Activated CD4-positive, alpha-beta T cell treated with anti-CD3 and anti-CD28 coated beads for 36 hours (primary cell): ENCODE measurements at regions of chr19 and their contacts with region 1.

Region 1: DNA sequence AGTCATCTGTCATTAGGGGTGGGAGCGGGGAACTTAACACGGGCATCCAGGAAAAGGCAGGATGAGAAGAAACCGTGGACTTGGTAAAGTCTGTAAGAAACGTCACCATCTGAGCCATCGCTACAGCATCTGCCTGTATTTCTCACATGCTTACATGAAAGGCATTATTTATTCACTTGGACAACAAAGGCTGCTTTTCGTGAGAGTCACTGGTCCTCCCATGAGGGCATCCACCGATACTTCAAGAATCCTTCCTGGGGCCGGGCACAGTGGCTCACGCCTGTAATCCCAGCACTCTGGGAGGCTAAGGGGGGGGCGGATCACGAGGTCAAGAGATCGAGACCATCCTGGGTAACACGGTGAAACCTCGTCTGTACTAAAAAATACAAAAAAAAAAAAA is 16.1 kb downstream of the ZNF446 start:
- DNase-seq: no peak
- ATAC-seq: no peak
- H3K4me3 Mint-ChIP-seq: no peak overlapping the region
- H3K27ac Mint-ChIP-seq: no peak overlapping the region
- H3K4me1 Mint-ChIP-seq: peaks cover 7% of the 10 kb centered on the region
- H3K27me3 Mint-ChIP-seq: no peaks in the 10 kb centered on the region

Region 2: GRCh38 chr19:58196901-58197616 is 295.2 kb before region 1 on chr19:
- CTCF ChIA-PET with region 1: no interaction called
- POLR2A ChIA-PET with region 1: no interaction called
- intact Hi-C with region 1: no loop called
- DNase-seq: no peak
- ATAC-seq: no peak
- H3K4me3 Mint-ChIP-seq: no peak overlapping the region
- H3K27ac Mint-ChIP-seq: no peak overlapping the region
- H3K4me1 Mint-ChIP-seq: no peaks in the 10 kb centered on the region
- H3K27me3 Mint-ChIP-seq: no peaks in the 10 kb centered on the region

Region 3: GRCh38 chr19:58284199-58284598 is 208.1 kb before region 1 on chr19:
- CTCF ChIA-PET with region 1: no interaction called
- POLR2A ChIA-PET with region 1: no interaction called
- intact Hi-C with region 1: no loop called
- DNase-seq: no peak
- ATAC-seq: no peak
- H3K4me3 Mint-ChIP-seq: no peak overlapping the region
- H3K27ac Mint-ChIP-seq: no peak overlapping the region
- H3K4me1 Mint-ChIP-seq: peaks cover 26% of the 10 kb centered on the region
- H3K27me3 Mint-ChIP-seq: no peaks in the 10 kb centered on the region

Region 4: DNA sequence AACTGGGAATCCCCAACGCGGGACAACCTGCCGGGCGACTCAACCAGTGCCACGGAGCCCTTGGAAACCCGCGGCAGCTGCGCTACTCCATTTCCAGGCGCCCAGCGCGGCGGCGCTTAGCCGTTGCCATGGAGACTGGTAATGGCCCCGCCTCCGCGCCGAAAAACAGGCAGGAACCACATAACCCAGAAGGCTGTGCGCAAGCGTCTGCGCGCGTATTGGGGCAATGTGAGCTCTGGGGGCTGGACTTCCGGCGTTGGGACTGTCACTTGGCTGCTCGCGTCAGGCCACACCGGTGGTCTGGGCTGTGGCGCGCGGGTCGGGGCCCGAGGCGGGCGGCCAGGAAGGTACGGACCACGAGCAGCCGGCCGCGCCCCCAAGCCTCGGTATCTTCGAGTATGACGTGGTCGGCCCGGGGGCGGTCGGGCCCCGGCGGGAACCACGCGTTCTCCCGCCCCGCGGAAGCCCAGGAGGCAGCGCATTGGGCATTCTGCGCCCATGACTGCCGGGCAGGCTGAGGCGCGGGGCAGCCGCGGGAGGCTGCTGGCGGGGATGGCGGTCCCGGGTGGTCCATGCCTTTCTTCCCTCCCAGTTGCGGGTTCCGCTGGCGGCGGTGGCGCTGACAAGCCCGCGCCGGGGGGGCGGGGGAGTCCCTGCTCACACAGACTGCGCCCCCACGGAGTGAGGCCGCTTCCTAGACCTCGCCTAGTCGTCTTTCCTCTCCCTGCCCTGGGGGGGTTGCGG is 40.7 kb before region 1 on chr19 and contains the start of gene ZNF324B:
- CTCF ChIA-PET with region 1: no interaction called
- POLR2A ChIA-PET with region 1: interaction called, 11 read pairs
- intact Hi-C with region 1: loop called in 1 of 2 experiments (anchors 1 kb)
- DNase-seq: peak; percentile 98
- ATAC-seq: peak; percentile 99
- H3K4me3 Mint-ChIP-seq: peak within 1 kb of the TSS; percentile 77
- H3K27ac Mint-ChIP-seq: peak within 1 kb of the TSS; percentile 55
- H3K4me1 Mint-ChIP-seq: peaks cover 25% of the 10 kb centered on the region
- H3K27me3 Mint-ChIP-seq: peaks cover 15% of the 10 kb centered on the region
- total RNA-seq, gene ZNF324B: 5.8 to 7.5 TPM